ENCODE measurements at regions of chr3 and their contacts with region 1.

Region 1: DNA sequence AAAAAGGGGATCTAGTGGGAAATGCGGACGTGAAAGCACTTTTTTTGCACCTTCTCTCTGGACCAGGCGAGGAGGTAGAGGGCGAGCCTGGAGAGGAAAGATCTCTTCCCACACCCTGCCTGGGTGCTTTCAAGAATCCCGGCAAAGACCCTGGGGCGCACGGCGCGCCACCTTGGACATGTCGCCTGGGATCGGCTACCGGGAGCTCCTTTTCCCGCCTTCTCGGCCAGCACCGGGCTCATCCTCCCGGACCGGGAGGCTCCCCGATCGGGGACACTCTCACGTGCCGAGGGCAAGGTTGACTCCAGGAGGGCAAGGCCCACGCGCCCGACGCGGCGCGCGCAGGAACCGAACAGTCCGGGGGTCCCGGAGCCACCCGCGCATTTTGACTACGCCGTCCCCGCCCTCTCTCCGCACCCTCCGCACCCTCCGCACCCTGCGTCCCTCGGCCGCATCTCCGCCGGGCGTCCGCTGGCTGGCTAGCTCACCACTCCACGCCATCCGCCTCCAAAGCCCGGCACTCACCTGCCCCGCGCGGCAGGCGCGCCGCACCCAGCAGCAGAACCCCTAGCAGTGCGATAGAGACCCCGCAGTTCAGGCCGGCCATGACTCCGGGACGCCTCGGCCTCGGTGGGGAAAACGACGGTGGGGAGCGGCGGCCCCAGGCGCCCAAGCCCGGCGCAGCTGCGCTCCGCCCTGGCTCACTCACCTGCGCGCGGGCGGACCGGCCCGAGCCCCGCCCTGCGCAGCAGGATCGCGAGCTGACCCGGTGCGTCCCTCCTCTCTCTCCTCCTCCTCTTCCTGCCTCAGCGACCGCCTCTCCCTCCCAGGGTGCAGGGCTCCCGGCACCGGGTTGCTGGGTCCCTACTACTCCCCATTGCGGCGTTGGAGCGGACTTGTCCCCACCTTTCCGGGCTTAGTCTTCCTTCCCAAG is at the start of gene CDCP1:
- H3K4me3 Mint-ChIP-seq: peak within 1 kb of the TSS; percentile 96
- H3K27ac Mint-ChIP-seq: peak within 1 kb of the TSS; percentile 89
- H3K4me1 Mint-ChIP-seq: peaks cover 32% of the 10 kb centered on the region
- H3K27me3 Mint-ChIP-seq: peaks cover 22% of the 10 kb centered on the region

Region 2: GRCh38 chr3:45064512-45065372 is 81.2 kb before region 1 on chr3:
- intact Hi-C with region 1: loop called (anchors 5 kb)
- H3K4me3 Mint-ChIP-seq: peak overlapping the region; percentile 81
- H3K27ac Mint-ChIP-seq: peak overlapping the region; percentile 97
- H3K4me1 Mint-ChIP-seq: peaks cover 71% of the 10 kb centered on the region
- H3K27me3 Mint-ChIP-seq: no peaks in the 10 kb centered on the region

Region 3: GRCh38 chr3:45199837-45200648 is 54.1 kb after region 1 on chr3:
- intact Hi-C with region 1: loop called (anchors 10 kb)
- H3K4me3 Mint-ChIP-seq: no peak overlapping the region
- H3K27ac Mint-ChIP-seq: no peak overlapping the region
- H3K4me1 Mint-ChIP-seq: peaks cover 13% of the 10 kb centered on the region
- H3K27me3 Mint-ChIP-seq: peaks cover 9% of the 10 kb centered on the region